Mucosa of descending colon (tissue), 3 donors: ENCODE measurements at regions of chr14 and their contacts with region 1.

Region 1: DNA sequence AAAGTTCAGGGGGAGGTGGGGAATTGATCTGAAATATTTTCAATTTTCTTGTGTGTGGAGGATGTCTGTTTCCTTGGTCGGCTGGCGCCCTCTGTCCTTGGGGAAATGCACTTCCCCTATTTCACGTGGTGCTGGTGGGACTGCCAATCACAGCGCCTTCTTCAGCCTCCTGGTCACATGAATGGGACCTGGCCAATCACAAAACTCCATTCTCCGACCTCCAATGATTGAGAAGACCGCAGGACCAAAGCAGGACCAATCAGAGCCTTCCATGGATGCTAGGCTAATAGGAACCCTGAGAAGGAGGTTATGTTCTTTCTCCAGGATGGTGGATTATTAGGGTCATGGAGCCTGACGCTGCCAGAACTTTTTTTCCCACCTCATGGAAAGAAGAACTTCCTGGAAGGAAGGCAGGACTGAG is 188.6 kb downstream of the TTC8 start:
- DNase-seq: peak; percentile 72 to 82 (median 79)
- ATAC-seq: peak; percentile 91
- H3K4me3 ChIP-seq: no peak overlapping the region
- H3K4me1 ChIP-seq: no peaks in the 10 kb centered on the region
- CTCF ChIP-seq: peak; percentile 20

Region 2: GRCh38 chr14:88667555-88668273 is 345.4 kb before region 1 on chr14:
- intact Hi-C with region 1: loop called in 1 of 2 experiments (anchors 5 kb)
- DNase-seq: peak in 2 of 3 donors; percentile 40 to 59
- ATAC-seq: peak; percentile 88
- H3K4me3 ChIP-seq: no peak overlapping the region
- H3K4me1 ChIP-seq: no peaks in the 10 kb centered on the region
- CTCF ChIP-seq: peak; percentile 63